ENCODE measurements at regions of chr5 and their contacts with region 1.

Region 1: GRCh38 chr5:179166886-179167841 is 107.0 kb downstream of the ZNF354C start:
- DNase-seq: peak in 1 of 2 experiments; percentile 92
- H3K4me3 ChIP-seq: peak overlapping the region in 3 of 4 experiments; percentile 21 to 51 (median 23); a peak in 4 of 8 replicates
- H3K27ac ChIP-seq: no peak overlapping the region
- H3K4me1 ChIP-seq: no peaks in the 10 kb centered on the region; a peak in 1 of 7 replicates
- H3K27me3 ChIP-seq: no peaks in the 10 kb centered on the region; a peak in 1 of 7 replicates
- CTCF ChIP-seq: peak in 2 of 3 experiments; percentile 79 to 99; a peak in 3 of 4 replicates
- EP300 ChIP-seq: no peak
- POLR2A ChIP-seq: no peak
- RAD21 ChIP-seq: peak; percentile 79 to 96

Region 2: GRCh38 chr5:179151286-179152118 is 15.7 kb before region 1 on chr5:
- CTCF ChIA-PET with region 1: interaction called, 11 read pairs
- POLR2A ChIA-PET with region 1: no interaction called
- DNase-seq: no peak
- H3K4me3 ChIP-seq: no peak overlapping the region
- H3K27ac ChIP-seq: no peak overlapping the region
- H3K4me1 ChIP-seq: no peaks in the 10 kb centered on the region
- H3K27me3 ChIP-seq: no peaks in the 10 kb centered on the region
- CTCF ChIP-seq: no peak
- EP300 ChIP-seq: no peak
- POLR2A ChIP-seq: no peak
- RAD21 ChIP-seq: no peak

Region 3: GRCh38 chr5:179181988-179182387 is 14.8 kb after region 1 on chr5:
- CTCF ChIA-PET with region 1: interaction called, 20 read pairs
- POLR2A ChIA-PET with region 1: no interaction called
- DNase-seq: no peak
- H3K4me3 ChIP-seq: no peak overlapping the region
- H3K27ac ChIP-seq: no peak overlapping the region
- H3K4me1 ChIP-seq: peaks cover 0 to 19% (median 13%) of the 10 kb centered on the region in 4 experiments; a peak in 6 of 7 replicates
- H3K27me3 ChIP-seq: no peaks in the 10 kb centered on the region
- CTCF ChIP-seq: no peak
- EP300 ChIP-seq: no peak
- POLR2A ChIP-seq: no peak
- RAD21 ChIP-seq: no peak

Region 4: DNA sequence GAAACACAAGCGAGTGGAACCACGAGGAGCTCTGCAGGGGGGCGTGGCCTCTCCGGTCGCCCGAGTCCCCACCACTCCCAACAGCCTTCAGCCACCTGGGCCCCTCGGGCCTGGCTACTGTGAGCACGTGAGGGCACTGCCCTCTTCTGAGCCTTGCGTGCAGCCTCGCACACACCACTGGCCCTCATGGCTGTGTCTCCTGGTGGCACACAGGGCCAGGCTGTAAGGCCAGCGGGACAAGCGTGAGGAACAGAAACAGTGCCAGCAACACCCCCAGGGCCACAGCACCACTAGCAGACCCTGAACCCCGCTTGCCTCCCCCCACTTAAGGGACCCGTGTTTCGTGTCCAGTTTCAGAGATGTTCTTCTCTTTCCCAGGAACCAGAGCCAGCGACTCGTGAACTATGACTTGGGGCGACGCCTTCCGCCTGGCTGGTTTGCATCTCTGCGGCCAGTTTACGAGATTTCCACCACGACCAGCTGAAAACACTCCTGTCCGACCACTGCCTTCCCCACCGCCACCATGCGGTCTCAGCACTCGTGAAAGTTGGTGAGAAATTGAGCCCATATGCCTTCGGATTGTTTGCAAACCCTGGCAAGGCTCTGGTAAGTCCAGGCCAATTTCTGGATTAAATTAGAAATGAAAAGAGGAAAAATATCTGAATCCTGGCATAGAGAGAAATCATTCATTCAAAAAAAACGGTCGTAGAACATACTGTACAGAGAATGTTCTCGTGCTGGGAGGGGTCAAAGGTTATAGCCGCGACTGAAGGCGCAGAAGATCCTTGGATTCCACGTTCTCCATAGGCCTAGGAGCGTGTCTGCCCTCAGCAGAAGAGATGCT is 28.6 kb after region 1 on chr5:
- CTCF ChIA-PET with region 1: no interaction called
- POLR2A ChIA-PET with region 1: no interaction called
- DNase-seq: no peak
- H3K4me3 ChIP-seq: no peak overlapping the region
- H3K27ac ChIP-seq: no peak overlapping the region
- H3K4me1 ChIP-seq: peaks cover 0 to 11% (median 2%) of the 10 kb centered on the region in 4 experiments; a peak in 4 of 7 replicates
- H3K27me3 ChIP-seq: no peaks in the 10 kb centered on the region
- CTCF ChIP-seq: no peak
- EP300 ChIP-seq: no peak
- POLR2A ChIP-seq: no peak
- RAD21 ChIP-seq: no peak

Region 5: DNA sequence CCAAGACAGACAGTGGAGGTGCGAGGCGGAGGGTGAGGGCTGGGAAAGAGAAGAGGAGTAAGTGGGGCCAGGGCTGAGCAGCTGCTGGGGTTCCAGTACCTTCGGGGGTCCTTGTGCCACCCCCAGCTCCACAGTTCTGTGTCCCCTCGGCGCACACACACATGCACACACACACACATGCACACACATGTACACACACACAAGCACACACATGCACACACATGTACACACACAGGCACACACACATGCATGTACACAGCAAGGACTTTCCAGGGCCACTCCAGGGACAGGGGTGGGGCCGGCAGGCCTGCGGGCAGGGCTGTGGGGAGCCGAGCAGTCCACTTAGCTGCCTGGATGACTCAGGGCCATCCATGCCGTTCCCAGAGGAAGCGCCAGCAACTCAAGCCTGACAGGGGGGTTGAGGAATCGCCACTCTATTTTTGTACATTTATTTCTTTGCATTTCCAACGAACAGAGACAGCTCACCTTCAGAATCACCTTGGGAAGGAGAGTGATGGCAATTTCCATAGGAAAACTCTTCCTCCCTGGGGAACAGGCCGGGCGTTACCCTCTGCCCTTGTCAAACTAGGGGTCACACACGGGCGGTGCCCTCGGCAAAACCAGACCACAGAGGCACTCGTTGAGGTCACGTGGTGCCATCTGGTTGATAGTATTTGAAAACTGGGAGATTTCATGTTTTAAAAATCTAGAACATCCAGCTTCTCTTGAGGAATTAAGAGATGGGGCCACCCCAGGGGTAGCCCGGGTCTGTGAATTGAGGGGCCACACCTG is 42.4 kb after region 1 on chr5:
- CTCF ChIA-PET with region 1: no interaction called
- POLR2A ChIA-PET with region 1: no interaction called
- DNase-seq: no peak
- H3K4me3 ChIP-seq: no peak overlapping the region
- H3K27ac ChIP-seq: no peak overlapping the region
- H3K4me1 ChIP-seq: peaks cover 0 to 2% (median 0%) of the 10 kb centered on the region in 4 experiments; a peak in 1 of 7 replicates
- H3K27me3 ChIP-seq: no peaks in the 10 kb centered on the region
- CTCF ChIP-seq: no peak
- EP300 ChIP-seq: no peak
- POLR2A ChIP-seq: no peak
- RAD21 ChIP-seq: no peak

Region 6: DNA sequence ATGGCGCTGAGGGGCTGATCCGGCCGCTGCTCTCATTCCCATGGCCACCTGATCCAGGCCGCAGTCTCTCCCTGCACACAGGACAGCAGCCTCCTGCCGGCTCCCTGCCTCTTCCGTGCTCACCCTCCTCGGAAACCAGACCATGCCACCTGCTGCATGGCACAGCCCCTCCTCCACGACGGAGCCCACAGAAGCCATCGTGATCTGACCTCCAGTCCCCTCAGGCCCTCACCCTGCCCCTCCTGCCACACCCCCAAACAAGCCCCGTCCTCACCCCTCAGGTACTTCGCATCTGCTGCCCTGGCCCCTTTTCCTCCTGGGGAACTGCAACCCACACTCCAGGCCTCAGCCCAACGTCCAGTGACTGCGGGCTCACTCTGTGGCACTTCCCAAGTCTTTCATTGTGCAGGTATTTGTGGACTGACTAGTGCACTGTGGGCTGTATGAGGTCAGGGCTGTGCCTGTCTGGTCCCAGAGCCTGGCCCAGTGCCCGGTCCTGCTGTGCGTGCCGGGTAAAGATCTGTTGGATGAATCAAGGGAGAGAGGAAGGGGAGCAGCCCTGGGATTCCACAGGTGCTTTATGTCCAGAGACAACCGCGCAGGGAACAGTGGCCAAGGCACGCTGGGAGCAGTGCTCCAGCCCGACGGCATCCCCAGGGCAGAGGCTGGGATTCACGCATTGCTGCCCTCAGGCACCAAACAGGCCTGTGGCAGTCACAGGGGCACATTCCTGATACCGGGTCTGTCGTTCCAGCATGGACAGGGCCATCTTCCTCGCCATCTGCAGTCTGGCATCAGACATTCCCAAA is 92.0 kb after region 1 on chr5:
- CTCF ChIA-PET with region 1: interaction called, 94 read pairs
- POLR2A ChIA-PET with region 1: no interaction called
- DNase-seq: peak in 1 of 2 experiments; percentile 41
- H3K4me3 ChIP-seq: no peak overlapping the region
- H3K27ac ChIP-seq: no peak overlapping the region
- H3K4me1 ChIP-seq: peaks cover 0 to 4% (median 2%) of the 10 kb centered on the region in 4 experiments; a peak in 3 of 7 replicates
- H3K27me3 ChIP-seq: no peaks in the 10 kb centered on the region
- CTCF ChIP-seq: no peak
- EP300 ChIP-seq: no peak
- POLR2A ChIP-seq: no peak
- RAD21 ChIP-seq: no peak

Region 7: DNA sequence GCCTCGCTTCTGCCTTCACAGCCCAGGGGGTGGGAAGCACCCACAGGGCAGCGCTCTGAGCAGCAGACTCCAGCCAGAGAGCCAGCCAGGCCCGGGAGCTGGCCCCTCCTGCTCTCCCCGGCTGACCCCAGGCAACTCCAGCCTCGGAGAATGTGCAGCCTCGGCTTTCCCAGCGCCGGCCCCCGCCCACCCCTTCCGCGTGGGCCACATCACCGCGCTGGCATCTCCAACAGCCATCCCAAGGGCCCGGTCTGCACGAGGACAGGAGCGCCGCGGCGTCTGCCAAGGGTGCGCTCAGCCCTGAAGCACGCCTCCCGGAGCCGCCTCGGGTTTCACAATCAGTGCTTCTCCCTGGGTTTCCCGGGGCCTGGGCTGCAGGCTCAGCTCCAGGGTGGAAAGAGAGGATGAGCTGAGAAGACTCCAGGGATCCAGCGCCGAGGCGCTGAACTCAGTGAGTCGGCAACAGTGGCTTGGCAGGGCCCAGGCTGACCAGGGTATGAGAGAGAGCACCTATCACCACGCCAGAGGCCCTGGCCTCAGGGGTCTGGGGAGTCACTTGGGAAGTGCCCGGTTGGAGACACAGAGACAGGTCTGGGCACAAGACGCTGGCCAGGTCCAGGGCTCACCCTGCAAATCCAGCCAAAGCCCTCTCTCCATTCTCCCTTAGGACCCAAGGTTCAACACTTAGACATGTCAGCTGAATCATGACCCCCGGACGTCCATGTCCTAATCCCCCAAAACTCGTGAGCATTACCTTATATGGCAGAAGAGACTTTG is 98.5 kb after region 1 on chr5:
- CTCF ChIA-PET with region 1: interaction called, 94 read pairs
- POLR2A ChIA-PET with region 1: no interaction called
- DNase-seq: peak in 1 of 2 experiments; percentile 71
- H3K4me3 ChIP-seq: no peak overlapping the region
- H3K27ac ChIP-seq: no peak overlapping the region
- H3K4me1 ChIP-seq: peaks cover 0 to 20% (median 11%) of the 10 kb centered on the region in 4 experiments; a peak in 6 of 7 replicates
- H3K27me3 ChIP-seq: no peaks in the 10 kb centered on the region
- CTCF ChIP-seq: no peak
- EP300 ChIP-seq: no peak
- POLR2A ChIP-seq: no peak
- RAD21 ChIP-seq: no peak

Region 8: GRCh38 chr5:179270631-179271591 is 103.7 kb after region 1 on chr5:
- CTCF ChIA-PET with region 1: interaction called, 94 read pairs
- POLR2A ChIA-PET with region 1: no interaction called
- DNase-seq: no peak
- H3K4me3 ChIP-seq: no peak overlapping the region
- H3K27ac ChIP-seq: no peak overlapping the region; the same call in 1 of the 2 replicates
- H3K4me1 ChIP-seq: peaks cover 0 to 9% (median 2%) of the 10 kb centered on the region in 4 experiments; a peak in 3 of 7 replicates
- H3K27me3 ChIP-seq: no peaks in the 10 kb centered on the region
- CTCF ChIP-seq: no peak
- EP300 ChIP-seq: no peak
- POLR2A ChIP-seq: no peak
- RAD21 ChIP-seq: no peak

Region 9: DNA sequence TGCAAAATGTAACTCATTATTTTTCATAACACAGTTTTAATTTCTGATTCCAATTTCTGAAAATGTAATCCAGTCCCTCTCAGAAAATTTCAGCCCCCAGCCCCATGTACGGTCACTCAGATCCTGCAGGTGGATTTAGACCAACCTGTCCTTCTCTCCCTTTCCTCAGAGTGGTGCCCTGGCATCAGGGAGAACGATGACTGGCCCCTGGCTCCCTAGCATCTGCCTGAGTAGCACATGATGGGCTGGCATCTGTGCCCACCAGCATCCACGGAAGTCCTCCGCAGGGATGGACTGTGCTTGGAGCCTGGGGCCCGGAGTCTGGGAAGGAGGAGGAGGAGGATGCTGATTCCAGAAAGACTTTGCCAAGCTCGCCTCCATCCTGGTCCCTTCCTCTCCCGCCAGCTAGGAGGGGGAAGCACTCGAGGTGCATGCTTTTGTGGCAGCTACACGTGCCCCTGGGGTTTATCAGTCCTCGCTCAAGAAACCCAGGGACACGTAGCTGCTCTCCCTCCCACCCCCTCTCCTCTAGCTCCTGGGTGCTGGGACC is 328.8 kb after region 1 on chr5:
- CTCF ChIA-PET with region 1: interaction called, 10 read pairs
- POLR2A ChIA-PET with region 1: no interaction called
- DNase-seq: no peak
- H3K4me3 ChIP-seq: no peak overlapping the region
- H3K27ac ChIP-seq: no peak overlapping the region
- H3K4me1 ChIP-seq: no peaks in the 10 kb centered on the region; a peak in 1 of 7 replicates
- H3K27me3 ChIP-seq: no peaks in the 10 kb centered on the region
- CTCF ChIP-seq: peak; percentile 48 to 57 (median 53)
- EP300 ChIP-seq: no peak
- POLR2A ChIP-seq: no peak
- RAD21 ChIP-seq: peak; percentile 78 to 79

Measured in H1 (cell line).